ENCODE measurements at regions of chr10 and their contacts with region 1.

Region 1: DNA sequence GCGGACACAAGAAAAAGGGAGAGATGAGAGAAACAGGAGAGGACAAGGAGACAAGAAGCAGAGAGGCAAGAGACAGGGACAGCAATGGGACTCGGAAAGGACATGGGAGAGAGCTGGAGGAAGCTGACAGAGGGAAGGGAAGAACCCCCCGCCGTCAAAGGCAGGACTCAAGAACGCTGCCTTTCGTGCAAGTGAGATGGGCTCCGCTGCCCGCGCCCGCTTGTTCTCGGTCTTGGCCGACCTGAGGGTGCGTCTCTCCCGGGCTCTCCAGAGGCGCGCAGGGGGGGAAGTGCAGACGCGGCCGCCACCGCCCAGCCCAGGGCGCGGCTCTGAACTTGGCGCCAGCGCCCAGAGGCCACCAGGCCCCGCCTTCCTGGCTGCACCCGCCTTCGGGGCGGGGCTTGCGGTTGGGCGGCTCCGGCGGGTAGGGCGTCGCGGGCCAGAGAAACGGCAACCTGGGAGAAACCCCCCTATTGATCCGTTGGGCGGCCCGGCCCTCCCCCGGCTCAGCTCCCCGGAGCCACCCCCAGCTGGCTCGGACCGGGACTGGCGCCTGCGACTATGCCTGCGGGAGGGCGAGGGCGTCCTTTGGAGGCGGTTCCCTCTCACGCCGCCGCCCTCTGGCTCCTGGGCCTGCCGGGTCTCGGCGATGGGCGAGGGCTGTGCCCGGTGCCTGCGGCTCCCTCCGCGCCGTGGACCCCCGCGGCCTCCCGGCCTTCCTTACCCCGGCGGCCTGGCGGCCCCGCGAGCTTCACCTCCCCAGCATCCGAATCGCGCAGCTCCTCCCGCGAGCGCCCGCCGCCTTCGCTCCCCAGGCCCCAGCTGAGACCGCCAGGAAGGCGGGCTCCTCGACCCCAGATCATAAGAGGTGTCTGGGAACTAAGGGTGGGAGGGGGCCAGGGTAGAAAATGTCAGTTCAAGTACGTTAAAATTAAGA is 2.2 kb upstream of the ANTXRL start:
- DNase-seq: peak; percentile 97
- H3K4me3 Mint-ChIP-seq: peak overlapping the region; percentile 96
- H3K27ac Mint-ChIP-seq: peak overlapping the region; percentile 87
- H3K4me1 Mint-ChIP-seq: peaks cover 22% of the 10 kb centered on the region
- H3K27me3 Mint-ChIP-seq: peaks cover 28% of the 10 kb centered on the region

Region 2: DNA sequence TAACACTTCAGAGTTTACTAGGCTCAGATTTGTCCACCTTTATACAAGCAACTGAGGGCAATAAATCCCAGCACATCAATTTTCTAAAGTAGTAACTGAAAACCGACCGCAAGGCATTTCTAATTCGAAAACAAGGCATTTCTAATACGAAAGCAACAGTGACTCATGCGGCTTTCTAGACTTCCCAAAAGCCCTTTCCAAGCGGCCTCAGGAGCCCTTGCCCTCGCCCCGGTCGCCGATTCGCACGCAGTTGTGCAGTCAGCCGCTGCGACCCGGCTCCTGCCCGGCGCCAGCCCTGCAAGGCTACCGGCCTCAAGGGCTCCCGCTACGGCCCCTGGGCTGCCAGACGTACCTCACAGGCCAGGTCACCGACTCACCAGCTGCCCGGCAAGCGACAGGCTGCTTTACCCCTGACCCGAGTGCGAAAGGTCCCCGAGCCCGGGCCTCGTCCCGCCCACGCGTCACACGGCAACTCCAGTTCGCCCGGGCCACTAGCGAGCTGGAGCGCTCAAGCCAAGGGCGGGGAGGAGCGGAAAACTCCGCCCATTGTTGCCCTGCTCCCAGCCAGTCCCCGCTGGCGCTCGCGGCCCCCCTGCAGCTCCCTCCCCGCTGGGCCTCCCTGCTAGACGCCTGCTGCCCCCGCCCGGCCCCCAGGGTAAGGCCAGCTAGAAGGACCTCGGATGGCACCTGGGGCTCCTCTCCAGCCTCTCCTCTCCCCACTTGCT is 261.4 kb before region 1 on chr10:
- intact Hi-C with region 1: loop called (anchors 10 kb)
- DNase-seq: peak; percentile 95
- H3K4me3 Mint-ChIP-seq: peak overlapping the region; percentile 85
- H3K27ac Mint-ChIP-seq: peak overlapping the region; percentile 72
- H3K4me1 Mint-ChIP-seq: peaks cover 58% of the 10 kb centered on the region
- H3K27me3 Mint-ChIP-seq: no peaks in the 10 kb centered on the region

Region 3: GRCh38 chr10:46079831-46080575 is 204.6 kb before region 1 on chr10:
- intact Hi-C with region 1: no loop called
- DNase-seq: no peak
- H3K4me3 Mint-ChIP-seq: no peak overlapping the region
- H3K27ac Mint-ChIP-seq: no peak overlapping the region
- H3K4me1 Mint-ChIP-seq: peaks cover 20% of the 10 kb centered on the region
- H3K27me3 Mint-ChIP-seq: peaks cover 2% of the 10 kb centered on the region

Region 4: GRCh38 chr10:46268076-46268881 is 16.3 kb before region 1 on chr10:
- intact Hi-C with region 1: loop called (anchors 1 kb)
- DNase-seq: peak; percentile 77
- H3K4me3 Mint-ChIP-seq: no peak overlapping the region
- H3K27ac Mint-ChIP-seq: no peak overlapping the region
- H3K4me1 Mint-ChIP-seq: peaks cover 31% of the 10 kb centered on the region
- H3K27me3 Mint-ChIP-seq: no peaks in the 10 kb centered on the region